Right ventricle myocardium inferior (tissue), 1 donor: ENCODE measurements at regions of chr15 and their contacts with region 1.

Region 1: DNA sequence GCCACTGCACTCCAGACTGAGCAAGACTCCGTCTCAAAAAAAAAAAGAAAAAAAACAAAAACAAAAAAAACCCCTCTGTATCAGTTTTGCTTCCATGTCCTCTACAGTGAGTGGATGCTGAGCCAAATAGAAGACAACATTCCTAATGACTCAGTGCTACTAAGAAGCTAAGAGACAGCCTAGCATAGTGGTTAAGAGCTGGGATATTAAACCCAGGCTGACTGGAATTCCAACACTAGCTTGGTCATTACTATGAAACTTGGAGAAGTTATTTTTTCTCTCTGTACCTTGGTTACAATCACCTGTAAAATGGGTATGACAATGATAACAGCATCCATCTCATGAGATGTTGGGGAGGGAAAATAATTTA is 60.9 kb upstream of the PYGO1 start:
- DNase-seq: no peak
- ATAC-seq: no peak

Region 2: GRCh38 chr15:55526559-55527036 is 122.4 kb before region 1 on chr15:
- intact Hi-C with region 1: loop called (anchors 5 kb)
- DNase-seq: no peak
- ATAC-seq: no peak

Region 3: DNA sequence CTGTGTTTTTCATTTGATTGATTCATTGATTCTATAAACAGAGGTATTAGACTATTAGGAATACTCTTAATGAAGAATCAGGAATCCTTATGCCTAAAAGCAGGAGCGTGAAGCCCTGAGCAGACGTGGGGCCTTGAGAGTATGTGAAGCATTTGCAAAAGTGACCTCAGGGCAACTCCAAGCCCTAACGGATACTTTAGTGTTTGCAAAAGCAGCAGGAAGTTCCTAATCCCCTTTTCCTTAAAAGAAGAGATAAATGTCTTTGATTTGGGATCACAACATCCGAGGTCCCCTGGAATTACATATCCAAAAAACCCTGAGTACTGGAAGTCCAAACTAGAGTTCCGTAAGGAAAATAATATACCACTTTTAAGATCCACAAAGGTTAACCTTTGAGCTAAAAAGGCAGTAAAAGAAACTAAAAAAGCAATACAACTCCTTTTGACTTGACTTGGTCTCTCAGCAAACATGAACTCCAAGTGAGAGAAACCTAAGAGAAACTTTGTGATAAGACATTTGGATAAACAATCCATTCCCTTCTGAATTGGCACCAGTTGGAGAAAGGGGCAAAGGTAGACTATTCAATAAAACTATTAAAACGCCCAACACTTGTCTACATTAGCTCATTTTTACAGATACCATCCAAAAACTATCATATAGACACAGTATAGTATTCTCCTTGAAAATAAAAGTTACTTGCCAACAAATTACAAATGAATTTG is 66.5 kb after region 1 on chr15:
- intact Hi-C with region 1: no loop called
- DNase-seq: no peak
- ATAC-seq: no peak

Region 4: GRCh38 chr15:55799291-55800212 is 150.5 kb after region 1 on chr15:
- intact Hi-C with region 1: loop called (anchors 5 kb)
- DNase-seq: no peak
- ATAC-seq: no peak

Region 5: GRCh38 chr15:55823191-55823670 is 174.2 kb after region 1 on chr15:
- intact Hi-C with region 1: no loop called
- DNase-seq: no peak
- ATAC-seq: peak; percentile 77

Region 6: GRCh38 chr15:55846116-55846707 is 197.2 kb after region 1 on chr15:
- intact Hi-C with region 1: loop called (anchors 2 kb)
- DNase-seq: no peak
- ATAC-seq: peak; percentile 42